ENCODE measurements at regions of chr11 and their contacts with region 1.

Region 1: DNA sequence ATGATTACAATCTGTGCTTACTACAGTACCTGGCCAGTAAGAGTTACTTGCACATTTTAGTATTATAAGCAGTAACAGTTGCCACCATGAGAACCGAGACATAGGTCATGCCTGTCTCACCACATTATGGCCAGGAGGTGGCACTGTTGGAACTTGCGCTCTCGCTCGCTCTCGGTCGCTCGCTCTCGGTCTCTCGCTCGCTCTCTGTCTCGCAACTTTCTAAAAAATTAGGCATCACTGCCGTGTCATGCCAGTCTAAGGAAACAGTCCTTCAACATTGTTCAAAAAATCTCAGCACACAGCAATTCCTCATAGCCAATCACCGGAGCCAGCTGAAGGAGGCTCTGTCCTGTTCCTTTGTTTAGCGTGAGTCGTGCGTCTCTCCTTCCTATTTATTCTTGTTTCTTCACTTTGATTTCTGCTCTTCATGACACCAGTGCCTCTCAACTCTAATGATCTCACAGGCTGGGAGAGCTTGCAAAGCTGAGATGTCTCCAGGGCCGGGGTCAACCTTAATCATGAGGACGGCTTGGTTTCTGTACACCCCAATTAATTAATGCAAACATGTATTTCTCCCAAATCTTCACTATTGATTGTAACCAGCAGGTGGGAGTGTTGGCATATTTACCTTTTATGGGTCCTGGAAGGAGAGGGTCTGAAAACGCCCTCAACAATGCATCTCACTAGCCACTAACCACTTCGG is 6.3 kb upstream of the ADAMTS8 start:
- DNase-seq: peak; percentile 65 to 81
- ATAC-seq: peak; percentile 92

Region 2: DNA sequence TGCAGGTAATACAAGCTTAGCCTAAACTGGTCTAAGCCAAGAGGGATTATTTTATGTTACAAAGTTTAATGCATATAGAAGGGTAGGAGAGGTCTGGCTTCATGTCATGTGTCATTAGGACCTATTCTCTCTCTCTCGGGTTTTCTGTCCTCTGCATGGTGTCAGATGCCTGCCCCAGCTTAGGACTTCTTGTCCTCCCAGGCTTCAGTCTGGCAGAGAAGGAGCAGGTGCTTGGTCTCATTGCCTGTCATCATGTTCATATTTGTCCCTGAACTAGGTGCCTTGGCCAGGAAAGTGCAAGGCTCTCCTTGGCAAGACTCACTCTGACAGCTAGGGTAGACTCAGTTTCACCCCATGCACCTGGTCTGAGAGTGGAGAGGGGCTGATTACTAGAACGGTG is 140.1 kb after region 1 on chr11:
- intact Hi-C with region 1: no loop called
- DNase-seq: no peak
- ATAC-seq: no peak

Region 3: DNA sequence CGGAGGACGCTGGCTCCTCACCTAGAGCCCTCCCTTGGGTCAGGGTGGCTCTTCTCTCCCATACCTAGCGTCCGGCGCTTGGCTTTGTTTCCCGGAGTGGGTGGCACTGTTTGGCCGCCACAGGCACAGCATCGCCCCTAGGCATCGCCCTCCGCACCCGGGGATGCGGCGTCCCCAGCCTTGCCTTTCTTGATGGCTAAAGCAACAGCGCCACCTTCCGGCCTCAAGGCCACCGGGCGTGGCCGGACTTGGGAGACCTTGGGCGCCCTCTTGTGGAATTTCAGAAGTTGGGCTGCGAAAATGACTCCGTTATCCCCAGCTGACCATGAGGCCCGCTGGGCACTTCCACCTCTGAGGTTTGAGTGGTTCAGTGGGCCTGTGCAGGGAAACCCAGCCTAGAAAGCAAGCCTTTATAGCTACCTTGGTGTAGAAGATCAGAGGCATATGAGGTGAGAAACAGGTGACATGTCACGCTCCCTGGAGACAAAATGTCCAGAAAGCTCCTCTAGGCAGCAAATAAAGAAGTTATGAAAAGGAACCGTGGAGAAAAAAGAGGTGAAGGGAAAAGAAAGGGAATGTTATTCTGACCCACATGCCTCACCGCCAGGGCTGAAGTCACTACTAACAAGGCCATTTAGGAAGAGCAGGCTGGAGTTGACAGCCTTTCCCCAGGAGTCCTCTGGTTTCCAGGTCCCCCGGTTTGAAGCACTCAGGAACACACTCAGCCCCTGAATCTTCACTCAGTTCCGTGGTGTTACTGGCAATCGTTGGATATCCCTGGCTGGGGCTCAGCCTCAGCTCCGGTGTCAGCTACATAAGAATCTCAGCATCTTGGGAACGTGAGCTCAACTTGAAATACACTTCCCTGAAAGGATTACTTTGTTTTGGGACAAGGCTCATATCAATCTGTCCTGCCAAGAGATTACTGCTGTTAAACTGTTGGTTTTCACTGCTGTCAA is 427.5 kb after region 1 on chr11:
- intact Hi-C with region 1: loop called (anchors 2 to 10 kb)
- DNase-seq: peak; percentile 81 to 95
- ATAC-seq: peak; percentile 85

Region 4: DNA sequence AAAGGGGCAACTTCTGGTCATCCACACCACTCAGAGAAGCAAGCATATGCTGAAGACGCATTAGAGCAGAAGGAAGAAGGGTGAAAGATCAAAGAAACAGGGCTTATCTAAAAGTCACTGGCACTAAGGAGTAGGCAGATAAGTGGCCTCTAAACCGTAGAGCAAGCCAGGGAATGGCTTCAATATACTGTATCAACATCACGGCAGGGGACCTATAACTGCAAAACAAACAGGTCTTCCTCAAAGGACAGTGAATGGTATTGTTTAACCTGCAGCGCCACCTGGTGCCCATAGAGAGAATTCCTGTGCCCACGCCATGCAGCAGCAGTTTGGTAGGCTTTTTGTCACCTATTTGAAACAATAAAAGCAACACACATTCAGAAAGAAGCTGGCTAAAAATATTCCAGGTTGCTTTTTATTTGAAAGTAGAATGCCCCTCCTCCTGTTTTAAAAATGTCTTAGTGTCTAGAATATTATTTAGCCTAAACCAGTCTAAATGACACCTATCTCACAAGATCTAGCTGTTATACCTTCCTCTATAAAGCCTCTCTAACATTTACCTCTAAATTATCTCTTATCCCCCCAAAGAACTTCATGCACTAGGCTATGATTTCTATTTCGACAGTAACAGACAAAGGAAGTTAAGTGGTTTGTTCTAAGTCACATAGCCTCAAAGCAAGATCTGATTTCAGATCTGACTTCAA is 459.8 kb after region 1 on chr11:
- intact Hi-C with region 1: loop called in 1 of 2 experiments (anchors 10 kb)
- DNase-seq: peak; percentile 54 to 78
- ATAC-seq: peak; percentile 94

Measured in left colon (tissue), 2 donors.